ENCODE measurements at regions of chr12 and their contacts with region 1.

Region 1: GRCh38 chr12:60093428-60093827 is 497.6 kb downstream of the SLC16A7 start:
- DNase-seq: no peak
- ATAC-seq: no peak
- H3K4me3 ChIP-seq: no peak overlapping the region
- H3K27ac ChIP-seq: no peak overlapping the region
- H3K4me1 ChIP-seq: no peaks in the 10 kb centered on the region
- H3K27me3 ChIP-seq: no peaks in the 10 kb centered on the region
- CTCF ChIP-seq: no peak
- POLR2A ChIP-seq: no peak
- RAD21 ChIP-seq: no peak

Region 2: DNA sequence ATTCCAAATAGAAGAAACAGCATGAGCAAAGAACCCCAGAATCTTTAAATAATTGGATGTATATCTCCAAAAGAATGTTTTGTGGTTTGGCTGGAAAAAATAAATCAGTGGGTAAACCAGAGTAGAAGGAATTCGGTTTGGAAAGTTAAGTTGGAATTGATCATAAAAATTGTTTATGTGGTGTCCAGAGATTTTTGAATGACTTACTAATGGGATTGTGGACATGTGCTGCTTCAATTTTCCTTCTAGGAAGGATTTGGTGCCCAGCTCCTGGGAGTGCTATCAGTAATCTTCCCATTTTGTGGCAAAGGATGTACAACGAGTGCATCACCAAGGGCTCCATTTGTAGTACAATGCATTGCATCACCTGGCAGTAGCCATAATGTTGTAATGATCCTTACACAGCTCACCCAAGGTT is 272.8 kb before region 1 on chr12:
- CTCF ChIA-PET with region 1: no interaction called
- POLR2A ChIA-PET with region 1: no interaction called
- dilution Hi-C with region 1: no loop called
- in situ Hi-C with region 1: no loop called
- intact Hi-C with region 1: no loop called
- DNase-seq: peak; percentile 71
- ATAC-seq: peak; percentile 70
- H3K4me3 ChIP-seq: no peak overlapping the region
- H3K27ac ChIP-seq: no peak overlapping the region
- H3K4me1 ChIP-seq: peaks cover 3% of the 10 kb centered on the region; the same call in 1 of the 2 replicates
- H3K27me3 ChIP-seq: no peaks in the 10 kb centered on the region
- CTCF ChIP-seq: no peak
- POLR2A ChIP-seq: no peak
- RAD21 ChIP-seq: no peak

Region 3: DNA sequence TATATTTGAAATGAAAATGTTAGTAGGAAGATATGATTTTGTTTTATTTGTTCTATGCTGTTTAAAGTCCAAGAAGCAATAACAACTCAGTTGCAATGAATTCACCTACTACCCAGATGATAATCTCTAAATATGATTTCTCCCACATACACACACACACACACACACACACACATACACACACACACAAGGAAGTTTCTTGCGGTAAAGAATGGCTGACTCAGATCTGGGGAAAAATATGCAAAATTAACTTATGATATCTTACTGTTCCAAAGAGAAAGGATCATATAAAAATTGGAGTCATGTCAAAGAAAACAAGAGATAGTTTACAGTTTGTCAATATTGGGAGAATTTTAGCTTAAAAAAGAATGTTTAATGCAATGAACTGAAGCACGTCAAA is 40.9 kb before region 1 on chr12:
- CTCF ChIA-PET with region 1: no interaction called
- POLR2A ChIA-PET with region 1: no interaction called
- dilution Hi-C with region 1: no loop called
- in situ Hi-C with region 1: no loop called
- intact Hi-C with region 1: no loop called
- DNase-seq: peak; percentile 13
- ATAC-seq: no peak
- H3K4me3 ChIP-seq: no peak overlapping the region
- H3K27ac ChIP-seq: no peak overlapping the region
- H3K4me1 ChIP-seq: no peaks in the 10 kb centered on the region
- H3K27me3 ChIP-seq: no peaks in the 10 kb centered on the region
- CTCF ChIP-seq: no peak
- POLR2A ChIP-seq: no peak
- RAD21 ChIP-seq: no peak

Region 4: DNA sequence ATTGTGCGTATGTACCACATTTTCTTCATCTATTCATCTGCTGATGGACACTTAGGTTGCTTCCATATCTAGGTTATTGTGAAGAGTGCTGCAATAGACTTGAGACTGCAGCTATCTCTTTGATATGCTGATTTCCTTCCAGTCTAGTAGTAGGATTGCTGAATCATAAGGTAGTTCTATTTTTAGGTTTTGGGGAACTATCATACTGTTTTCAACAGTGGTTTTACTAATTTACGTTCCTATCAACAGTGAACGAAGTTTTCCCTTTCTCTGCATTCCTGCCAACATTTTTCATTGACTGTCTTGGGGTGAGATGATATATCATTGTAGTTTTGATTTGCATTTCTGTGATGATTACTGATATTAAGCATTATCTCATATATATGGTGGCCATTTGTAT is 15.4 kb before region 1 on chr12:
- CTCF ChIA-PET with region 1: interaction called, 5 read pairs
- POLR2A ChIA-PET with region 1: no interaction called
- dilution Hi-C with region 1: no loop called
- in situ Hi-C with region 1: no loop called
- intact Hi-C with region 1: loop called (anchors 1 kb)
- DNase-seq: peak; percentile 8
- ATAC-seq: no peak
- H3K4me3 ChIP-seq: no peak overlapping the region
- H3K27ac ChIP-seq: no peak overlapping the region
- H3K4me1 ChIP-seq: no peaks in the 10 kb centered on the region
- H3K27me3 ChIP-seq: no peaks in the 10 kb centered on the region
- CTCF ChIP-seq: no peak
- POLR2A ChIP-seq: no peak
- RAD21 ChIP-seq: no peak

Region 5: GRCh38 chr12:60112763-60113162 is 19.3 kb after region 1 on chr12:
- CTCF ChIA-PET with region 1: no interaction called
- POLR2A ChIA-PET with region 1: no interaction called
- dilution Hi-C with region 1: no loop called
- in situ Hi-C with region 1: no loop called
- intact Hi-C with region 1: no loop called
- DNase-seq: no peak
- ATAC-seq: no peak
- H3K4me3 ChIP-seq: no peak overlapping the region
- H3K27ac ChIP-seq: no peak overlapping the region
- H3K4me1 ChIP-seq: no peaks in the 10 kb centered on the region
- H3K27me3 ChIP-seq: no peaks in the 10 kb centered on the region
- CTCF ChIP-seq: no peak
- POLR2A ChIP-seq: no peak
- RAD21 ChIP-seq: no peak

Region 6: GRCh38 chr12:60317361-60317760 is 223.9 kb after region 1 on chr12:
- CTCF ChIA-PET with region 1: no interaction called
- POLR2A ChIA-PET with region 1: no interaction called
- dilution Hi-C with region 1: no loop called
- in situ Hi-C with region 1: no loop called
- intact Hi-C with region 1: loop called (anchors 1 kb)
- DNase-seq: no peak
- ATAC-seq: no peak
- H3K4me3 ChIP-seq: no peak overlapping the region
- H3K27ac ChIP-seq: no peak overlapping the region
- H3K4me1 ChIP-seq: no peaks in the 10 kb centered on the region
- H3K27me3 ChIP-seq: no peaks in the 10 kb centered on the region
- CTCF ChIP-seq: no peak
- POLR2A ChIP-seq: no peak
- RAD21 ChIP-seq: no peak

Measured in IMR-90 (cell line).